ENCODE measurements at regions of chr10 and their contacts with region 1.

Region 1: DNA sequence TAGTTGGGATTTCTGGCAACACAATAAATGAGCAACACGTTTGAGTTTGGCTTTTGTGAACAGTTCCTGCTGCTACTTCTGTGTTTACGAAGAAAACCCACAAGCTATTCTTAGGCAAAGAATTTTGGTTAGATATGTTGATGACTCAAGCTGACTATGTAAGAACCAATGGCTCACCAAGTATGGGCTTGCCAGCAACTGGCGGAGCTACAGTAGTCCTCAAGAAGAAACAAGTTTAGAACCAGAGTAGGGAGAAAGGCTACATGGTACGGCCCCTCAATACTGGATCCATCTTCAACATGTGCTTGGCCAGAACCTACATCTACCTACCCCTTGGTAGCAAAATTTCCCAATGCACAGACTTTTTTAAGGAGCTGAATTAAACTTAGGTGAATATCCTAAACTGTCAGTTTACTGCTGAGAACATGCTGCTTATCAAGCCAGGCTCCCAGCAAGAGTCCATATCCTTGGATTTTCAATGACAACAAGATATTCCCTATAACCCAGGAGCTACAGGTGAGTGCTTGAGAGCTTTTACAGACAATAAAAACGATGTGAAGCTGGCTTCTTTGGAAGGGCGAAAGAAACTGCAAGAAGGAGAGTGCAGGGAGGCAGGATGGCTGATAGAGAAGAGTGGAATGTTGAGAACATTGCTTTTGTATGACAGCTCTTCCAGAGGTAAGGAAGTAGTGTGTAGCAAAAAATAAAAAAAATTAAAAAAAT is 74.3 kb upstream of the ASAH2 start:
- DNase-seq: peak; percentile 59
- ATAC-seq: peak; percentile 64

Region 2: DNA sequence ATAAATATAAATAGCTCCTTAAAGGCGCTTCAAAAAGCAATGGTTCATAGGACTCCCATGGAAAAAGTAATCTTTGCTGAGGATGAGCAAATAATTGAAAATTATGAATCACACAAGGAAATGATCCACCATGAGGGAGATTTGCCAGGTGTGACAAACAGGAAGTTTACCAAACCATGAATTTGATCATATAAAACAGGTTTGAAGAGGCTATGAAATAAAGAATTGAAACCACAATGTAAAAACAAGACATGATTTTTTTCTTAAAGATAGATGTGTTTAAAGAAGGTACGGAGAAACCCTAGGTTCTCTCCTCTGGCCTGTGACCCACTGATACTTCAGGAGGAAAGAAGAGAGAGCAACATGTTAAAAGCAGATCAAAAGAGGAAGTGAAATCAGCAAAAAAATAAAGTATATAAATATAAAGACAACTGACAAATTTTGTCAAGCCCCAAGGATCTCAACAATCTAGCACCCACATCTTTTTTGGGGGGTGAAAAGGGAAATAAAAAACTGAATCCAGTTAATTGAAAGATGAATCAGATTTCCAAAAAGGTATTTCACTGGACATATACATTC is 37.0 kb after region 1 on chr10:
- intact Hi-C with region 1: loop called (anchors 5 kb)
- DNase-seq: no peak
- ATAC-seq: no peak

Region 3: DNA sequence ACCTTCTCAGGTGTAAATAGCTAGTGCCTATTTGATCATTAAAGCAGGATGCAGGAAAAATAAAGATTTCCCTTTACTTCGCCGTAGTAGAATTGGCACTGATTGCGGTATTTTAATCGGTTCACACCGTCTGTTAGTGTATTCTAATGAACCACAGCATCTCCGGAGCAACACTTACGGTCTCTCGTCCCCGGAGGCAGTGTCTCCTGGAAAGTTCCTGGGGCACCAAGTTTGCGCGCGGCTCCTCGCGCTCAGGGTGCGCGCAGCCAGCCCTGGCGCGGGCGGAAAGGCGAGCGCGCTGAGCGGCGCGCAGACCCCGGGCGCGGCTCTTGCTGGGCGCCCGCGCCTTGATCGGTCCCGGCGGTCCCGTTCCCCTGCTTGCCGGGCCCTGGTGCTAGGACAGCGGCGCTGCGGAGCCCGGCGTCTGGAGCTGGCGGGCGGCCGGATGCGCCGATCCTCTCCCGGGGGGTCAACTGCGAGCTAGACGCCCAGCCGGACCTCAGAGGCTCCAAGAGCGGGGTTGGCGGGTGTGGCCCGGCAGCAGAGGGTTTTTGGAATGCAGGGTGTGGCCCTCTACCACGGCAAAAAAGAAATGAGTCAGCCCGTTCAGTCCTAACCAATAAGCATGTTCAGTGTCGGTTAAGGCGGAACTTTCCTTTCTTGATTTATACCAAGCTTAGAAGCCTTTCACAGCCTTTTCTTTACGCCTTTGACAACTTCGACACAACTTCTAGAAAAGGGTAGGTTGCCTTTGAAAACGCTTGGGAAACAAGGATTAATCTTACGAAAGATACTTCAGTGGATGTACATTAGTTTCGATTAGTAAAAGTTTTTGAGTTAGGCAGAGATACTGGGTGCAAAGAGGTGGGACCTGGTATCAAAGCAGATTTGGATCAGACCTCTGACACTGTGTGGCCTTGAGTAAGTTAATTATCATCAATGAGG is 92.5 kb after region 1 on chr10:
- intact Hi-C with region 1: loop called (anchors 10 kb)
- DNase-seq: peak; percentile 88
- ATAC-seq: peak; percentile 92

Region 4: GRCh38 chr10:50552771-50553535 is 227.3 kb after region 1 on chr10:
- intact Hi-C with region 1: loop called (anchors 10 kb)
- DNase-seq: no peak
- ATAC-seq: no peak

Region 5: DNA sequence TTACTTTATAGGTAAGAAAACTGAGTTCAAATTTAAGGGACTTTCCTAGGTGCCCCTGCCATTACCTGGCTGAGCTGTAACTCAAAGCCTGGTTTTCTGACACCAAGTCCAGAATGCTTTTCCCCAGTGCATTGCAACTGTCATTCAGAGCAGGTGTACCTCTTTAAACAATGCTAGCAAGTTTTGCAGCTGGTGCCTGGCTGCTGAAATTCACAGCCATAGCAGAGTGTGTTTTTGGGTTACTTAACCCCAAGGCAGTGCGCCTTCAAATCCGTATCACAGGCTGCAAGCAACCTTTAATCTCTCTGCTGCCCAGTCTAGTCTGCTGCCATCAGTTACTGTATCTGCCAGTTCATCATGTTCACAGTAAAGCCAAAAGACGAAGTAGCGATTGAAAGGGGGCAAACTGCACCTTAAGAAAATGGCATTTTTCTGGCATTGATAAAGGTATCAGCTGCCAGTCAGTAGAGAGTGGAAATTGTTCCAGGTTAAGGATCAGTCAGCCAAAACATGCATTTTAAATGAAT is 1108.4 kb after region 1 on chr10:
- intact Hi-C with region 1: no loop called
- DNase-seq: no peak
- ATAC-seq: no peak